HepG2 (cell line): ENCODE measurements at regions of chr7 and their contacts with region 1.

Region 1: DNA sequence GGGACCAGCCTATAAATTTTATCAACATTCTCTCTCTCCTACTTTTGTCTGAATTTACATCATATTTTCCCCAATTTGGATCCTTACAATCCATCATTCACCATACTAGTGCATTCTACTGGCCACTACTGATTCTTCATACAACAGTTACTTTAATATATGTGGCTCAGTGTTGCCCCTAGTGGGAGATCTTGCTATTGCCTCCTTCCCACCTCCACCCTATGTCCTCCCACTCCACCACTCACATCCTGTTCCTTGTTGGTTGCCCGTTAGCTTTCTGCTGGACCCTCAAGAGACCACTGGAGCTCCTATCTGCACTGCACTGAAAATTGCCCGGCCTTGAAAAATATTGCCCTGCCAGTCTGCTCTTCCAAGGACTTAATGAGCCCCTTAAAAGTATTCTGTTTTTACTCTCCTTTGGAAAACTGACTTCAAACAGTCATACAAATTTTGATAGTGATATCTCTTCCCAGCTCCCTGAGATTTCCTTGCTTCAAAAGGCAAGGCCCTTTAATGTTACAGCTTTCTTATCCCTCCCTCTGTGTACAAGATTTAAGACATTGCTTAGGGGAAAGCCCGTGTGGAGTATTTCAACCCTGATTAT is 243.3 kb upstream of the TMEM229A start:
- DNase-seq: peak; percentile 29
- ATAC-seq: peak; percentile 96
- H3K4me3 ChIP-seq: no peak overlapping the region
- H3K27ac ChIP-seq: no peak overlapping the region
- H3K4me1 ChIP-seq: no peaks in the 10 kb centered on the region
- H3K27me3 ChIP-seq: no peaks in the 10 kb centered on the region
- CTCF ChIP-seq: peak; percentile 33
- EP300 ChIP-seq: no peak
- POLR2A ChIP-seq: no peak
- RAD21 ChIP-seq: no peak

Region 2: GRCh38 chr7:124152859-124153692 is 123.0 kb before region 1 on chr7:
- CTCF ChIA-PET with region 1: no interaction called
- POLR2A ChIA-PET with region 1: no interaction called
- in situ Hi-C with region 1: no loop called
- intact Hi-C with region 1: loop called (anchors 5 kb)
- DNase-seq: peak; percentile 27
- ATAC-seq: peak; percentile 95
- H3K4me3 ChIP-seq: no peak overlapping the region
- H3K27ac ChIP-seq: no peak overlapping the region
- H3K4me1 ChIP-seq: no peaks in the 10 kb centered on the region
- H3K27me3 ChIP-seq: no peaks in the 10 kb centered on the region
- CTCF ChIP-seq: peak; percentile 46
- EP300 ChIP-seq: no peak
- POLR2A ChIP-seq: no peak
- RAD21 ChIP-seq: no peak

Region 3: GRCh38 chr7:124630395-124630794 is 354.3 kb after region 1 on chr7:
- CTCF ChIA-PET with region 1: no interaction called
- POLR2A ChIA-PET with region 1: no interaction called
- in situ Hi-C with region 1: no loop called
- intact Hi-C with region 1: no loop called
- DNase-seq: no peak
- ATAC-seq: no peak
- H3K4me3 ChIP-seq: no peak overlapping the region
- H3K27ac ChIP-seq: no peak overlapping the region
- H3K4me1 ChIP-seq: no peaks in the 10 kb centered on the region
- H3K27me3 ChIP-seq: no peaks in the 10 kb centered on the region
- CTCF ChIP-seq: no peak
- EP300 ChIP-seq: no peak
- POLR2A ChIP-seq: no peak
- RAD21 ChIP-seq: no peak